ENCODE measurements at regions of chr11 and their contacts with region 1.

Region 1: DNA sequence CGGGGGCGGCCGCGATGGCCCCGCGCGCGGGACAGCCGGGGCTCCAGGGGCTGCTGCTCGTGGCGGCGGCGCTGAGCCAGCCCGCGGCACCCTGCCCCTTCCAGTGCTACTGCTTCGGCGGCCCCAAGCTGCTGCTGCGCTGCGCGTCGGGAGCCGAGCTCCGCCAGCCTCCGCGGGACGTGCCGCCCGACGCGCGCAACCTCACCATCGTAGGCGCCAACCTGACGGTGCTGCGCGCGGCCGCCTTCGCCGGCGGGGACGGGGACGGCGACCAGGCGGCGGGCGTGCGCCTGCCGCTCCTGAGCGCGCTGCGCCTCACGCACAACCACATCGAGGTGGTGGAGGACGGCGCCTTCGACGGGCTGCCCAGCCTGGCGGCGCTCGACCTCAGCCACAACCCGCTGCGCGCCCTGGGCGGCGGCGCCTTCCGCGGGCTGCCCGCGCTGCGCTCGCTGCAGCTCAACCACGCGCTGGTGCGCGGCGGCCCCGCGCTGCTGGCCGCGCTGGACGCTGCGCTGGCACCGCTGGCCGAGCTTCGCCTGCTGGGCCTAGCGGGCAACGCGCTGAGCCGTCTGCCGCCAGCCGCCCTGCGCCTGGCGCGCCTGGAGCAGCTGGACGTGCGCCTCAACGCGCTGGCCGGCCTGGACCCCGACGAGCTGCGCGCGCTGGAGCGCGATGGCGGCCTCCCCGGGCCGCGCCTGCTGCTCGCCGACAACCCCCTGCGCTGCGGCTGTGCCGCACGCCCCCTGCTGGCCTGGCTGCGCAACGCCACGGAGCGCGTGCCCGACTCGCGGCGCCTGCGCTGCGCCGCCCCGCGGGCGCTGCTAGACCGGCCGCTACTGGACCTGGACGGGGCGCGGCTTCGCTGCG is 697 bp downstream of the TPBGL start:
- DNase-seq: peak; percentile 88
- ATAC-seq: peak; percentile 95
- H3K4me3 Mint-ChIP-seq: peak overlapping the region; percentile 70
- H3K27ac Mint-ChIP-seq: no peak overlapping the region
- H3K4me1 Mint-ChIP-seq: peaks cover 9% of the 10 kb centered on the region
- H3K27me3 Mint-ChIP-seq: peaks cover 54% of the 10 kb centered on the region

Region 2: DNA sequence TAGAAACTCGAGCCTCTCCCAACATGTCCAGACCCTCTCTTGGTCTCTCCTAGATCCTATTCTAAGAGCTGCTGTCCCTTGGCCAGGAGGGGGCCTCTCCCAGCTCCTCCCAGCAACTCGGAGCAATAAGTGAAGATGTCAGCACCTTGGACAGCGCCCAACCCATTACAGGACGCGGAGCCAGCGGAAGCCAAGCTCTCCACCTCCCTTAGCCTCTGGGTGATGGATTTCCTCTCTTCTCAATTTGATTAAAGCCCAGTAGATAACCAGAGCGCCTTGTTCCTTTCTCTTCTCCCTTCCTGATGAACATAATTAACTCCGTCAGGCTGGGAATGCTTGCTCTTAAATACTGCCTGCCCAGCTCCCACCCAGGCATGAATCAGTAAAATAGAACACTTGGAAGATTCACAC is 26.9 kb before region 1 on chr11:
- CTCF ChIA-PET with region 1: interaction called, 19 read pairs
- POLR2A ChIA-PET with region 1: no interaction called
- DNase-seq: peak; percentile 93
- ATAC-seq: peak; percentile 87
- H3K4me3 Mint-ChIP-seq: no peak overlapping the region
- H3K27ac Mint-ChIP-seq: no peak overlapping the region
- H3K4me1 Mint-ChIP-seq: no peaks in the 10 kb centered on the region
- H3K27me3 Mint-ChIP-seq: peaks cover 27% of the 10 kb centered on the region

Region 3: DNA sequence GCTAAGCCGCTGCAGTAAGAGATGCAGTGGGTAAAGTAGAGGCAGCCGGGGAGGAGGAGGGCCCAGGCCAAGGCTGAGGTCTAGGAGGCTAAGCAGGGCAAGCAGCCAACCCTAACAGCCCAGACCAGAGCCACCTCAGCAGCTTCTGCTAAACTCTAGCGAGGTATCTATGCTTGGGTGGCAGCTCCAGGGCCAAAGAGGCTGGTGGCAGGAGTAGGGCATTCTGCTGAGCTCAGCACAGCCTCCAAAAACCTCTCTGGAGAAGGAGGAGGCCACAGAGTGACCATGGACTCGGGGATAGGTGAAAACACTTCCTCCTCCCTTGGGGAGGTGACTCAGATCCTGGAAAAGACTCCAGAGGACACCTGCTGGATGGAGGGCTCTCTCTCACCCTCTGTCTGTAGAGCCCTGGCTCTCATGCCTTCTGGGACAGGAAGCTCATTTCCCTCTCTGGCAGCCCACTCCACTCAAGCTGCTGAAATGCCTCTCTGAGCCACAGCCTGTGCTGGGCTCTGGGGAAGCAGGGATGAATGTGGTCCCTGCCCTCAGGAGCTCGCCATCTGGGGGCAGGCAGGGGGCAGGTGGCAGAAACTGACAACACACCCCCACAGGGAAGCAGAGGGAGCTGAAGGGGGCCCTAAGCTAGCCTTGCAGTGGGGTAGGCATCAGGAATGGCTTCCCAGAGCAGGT is 17.2 kb before region 1 on chr11:
- CTCF ChIA-PET with region 1: interaction called, 12 read pairs
- POLR2A ChIA-PET with region 1: no interaction called
- DNase-seq: no peak
- ATAC-seq: no peak
- H3K4me3 Mint-ChIP-seq: no peak overlapping the region
- H3K27ac Mint-ChIP-seq: no peak overlapping the region
- H3K4me1 Mint-ChIP-seq: no peaks in the 10 kb centered on the region
- H3K27me3 Mint-ChIP-seq: peaks cover 8% of the 10 kb centered on the region

Region 4: GRCh38 chr11:75270896-75271418 is 29.7 kb after region 1 on chr11:
- CTCF ChIA-PET with region 1: interaction called, 28 read pairs
- POLR2A ChIA-PET with region 1: no interaction called
- DNase-seq: peak; percentile 37
- ATAC-seq: no peak
- H3K4me3 Mint-ChIP-seq: no peak overlapping the region
- H3K27ac Mint-ChIP-seq: peak overlapping the region; percentile 72
- H3K4me1 Mint-ChIP-seq: peaks cover 25% of the 10 kb centered on the region
- H3K27me3 Mint-ChIP-seq: no peaks in the 10 kb centered on the region